ENCODE measurements at regions of chr20 and their contacts with region 1.

Region 1: GRCh38 chr20:62182613-62183425 is at the start of gene MTG2:
- DNase-seq: peak; percentile 95 to 98
- ATAC-seq: peak; percentile 96 to 98 (median 98)
- H3K4me3 ChIP-seq: peak within 1 kb of the TSS; percentile 95
- H3K27ac ChIP-seq: peak within 1 kb of the TSS; percentile 96
- H3K4me1 ChIP-seq: peaks cover 13% of the 10 kb centered on the region
- H3K27me3 ChIP-seq: no peaks in the 10 kb centered on the region
- CTCF ChIP-seq: no peak
- total RNA-seq, gene MTG2: 29.5 to 56.5 (median 39.6) TPM

Region 2: DNA sequence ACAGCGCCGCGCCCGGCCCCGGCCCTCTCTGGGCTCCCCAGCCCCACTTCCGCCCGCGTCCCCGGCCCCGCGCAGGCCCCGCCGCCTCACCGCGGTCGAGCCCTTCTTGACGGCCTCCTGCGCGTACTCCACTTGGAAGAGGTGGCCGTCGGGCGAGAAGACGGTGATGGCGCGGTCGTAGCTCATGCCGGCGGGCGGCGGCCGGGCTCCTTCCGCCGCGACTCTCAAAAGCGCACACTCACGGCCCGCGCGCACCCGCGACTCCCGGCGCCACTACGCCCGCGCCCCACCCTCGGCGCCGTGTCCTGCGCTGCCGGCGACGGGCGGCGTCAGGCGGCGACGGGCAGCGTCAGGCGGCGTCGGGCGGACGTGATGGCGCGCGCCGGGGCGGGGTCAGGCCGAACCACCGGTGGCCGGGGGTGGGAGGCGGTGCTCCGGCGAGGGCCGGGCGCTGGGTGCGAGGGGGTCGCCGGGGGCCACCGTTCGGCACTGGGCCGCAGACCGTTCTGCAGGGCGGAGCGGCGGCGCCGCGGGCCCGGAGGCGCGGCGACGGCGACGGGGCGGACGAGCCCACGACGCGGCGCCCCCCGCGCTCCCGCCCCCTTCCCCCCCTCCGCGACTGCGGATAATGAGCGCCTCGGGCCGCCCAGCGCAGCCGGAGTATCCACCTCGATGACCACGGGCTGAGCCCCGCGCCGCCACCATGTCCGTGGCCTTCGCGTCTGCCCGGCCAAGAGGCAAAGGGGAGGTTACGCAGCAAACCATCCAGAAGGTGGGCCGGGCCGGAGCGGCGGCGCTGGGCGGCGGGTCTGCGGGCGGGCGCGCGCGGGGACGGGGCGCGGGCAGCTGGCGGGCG is 39.5 kb before region 1 on chr20 and contains the starts of genes PSMA7 and SS18L1:
- intact Hi-C with region 1: loop called in 1 of 2 experiments (anchors 2 kb)
- DNase-seq: peak; percentile 91 to 94
- ATAC-seq: peak; percentile 82 to 88 (median 88)
- H3K4me3 ChIP-seq: peak within 1 kb of the TSS; percentile 81
- H3K27ac ChIP-seq: peak within 1 kb of the TSS; percentile 93
- H3K4me1 ChIP-seq: peaks cover 22% of the 10 kb centered on the region
- H3K27me3 ChIP-seq: no peaks in the 10 kb centered on the region
- CTCF ChIP-seq: no peak
- total RNA-seq, gene PSMA7: 307 to 499 (median 459) TPM
- total RNA-seq, gene SS18L1: 10.2 to 18.0 (median 13.2) TPM

Region 3: GRCh38 chr20:62386383-62387218 is 203.8 kb after region 1 on chr20 and contains the start of gene RPS21:
- intact Hi-C with region 1: loop called (anchors 10 kb)
- DNase-seq: peak; percentile 94 to 98
- ATAC-seq: peak; percentile 92 to 94 (median 94)
- H3K4me3 ChIP-seq: peak within 1 kb of the TSS; percentile 88
- H3K27ac ChIP-seq: peak within 1 kb of the TSS; percentile 96
- H3K4me1 ChIP-seq: peaks cover 26% of the 10 kb centered on the region
- H3K27me3 ChIP-seq: no peaks in the 10 kb centered on the region
- CTCF ChIP-seq: no peak
- total RNA-seq, gene RPS21: 602 to 1,206 (median 1,044) TPM